Naive thymus-derived CD4-positive, alpha-beta T cell (primary cell): ENCODE measurements at regions of chr1 and their contacts with region 1.

Region 1: GRCh38 chr1:205061665-205062069 is 18.7 kb downstream of the CNTN2 start:
- DNase-seq: peak; percentile 58 to 79 (median 72)
- ATAC-seq: peak; percentile 83
- H3K4me3 ChIP-seq: no peak overlapping the region
- H3K4me3 Mint-ChIP-seq: no peak overlapping the region
- H3K27ac ChIP-seq: no peak overlapping the region
- H3K27ac Mint-ChIP-seq: no peak overlapping the region
- H3K4me1 ChIP-seq: no peaks in the 10 kb centered on the region
- H3K4me1 Mint-ChIP-seq: peaks cover 0 to 4% (median 0%) of the 10 kb centered on the region in 7 donors
- H3K27me3 ChIP-seq: no peaks in the 10 kb centered on the region
- H3K27me3 Mint-ChIP-seq: no peaks in the 10 kb centered on the region

Region 2: GRCh38 chr1:204975570-204976235 is 86.0 kb before region 1 on chr1:
- CTCF ChIA-PET with region 1: interaction called, 18 read pairs
- POLR2A ChIA-PET with region 1: no interaction called
- intact Hi-C with region 1: loop called (anchors 1 kb)
- DNase-seq: peak; percentile 14 to 60 (median 40)
- ATAC-seq: peak; percentile 71
- H3K4me3 ChIP-seq: no peak overlapping the region
- H3K4me3 Mint-ChIP-seq: no peak overlapping the region
- H3K27ac ChIP-seq: no peak overlapping the region
- H3K27ac Mint-ChIP-seq: no peak overlapping the region
- H3K4me1 ChIP-seq: no peaks in the 10 kb centered on the region
- H3K4me1 Mint-ChIP-seq: peaks cover 0 to 2% (median 0%) of the 10 kb centered on the region in 7 donors
- H3K27me3 ChIP-seq: no peaks in the 10 kb centered on the region
- H3K27me3 Mint-ChIP-seq: peaks cover 0 to 32% (median 20%) of the 10 kb centered on the region in 5 donors

Region 3: GRCh38 chr1:204989266-204990058 is 72.2 kb before region 1 on chr1:
- CTCF ChIA-PET with region 1: interaction called, 10 read pairs
- POLR2A ChIA-PET with region 1: no interaction called
- intact Hi-C with region 1: loop called in 1 of 2 experiments (anchors 1 kb)
- DNase-seq: peak; percentile 25 to 57 (median 44)
- ATAC-seq: peak; percentile 83
- H3K4me3 ChIP-seq: no peak overlapping the region
- H3K4me3 Mint-ChIP-seq: no peak overlapping the region
- H3K27ac ChIP-seq: no peak overlapping the region
- H3K27ac Mint-ChIP-seq: peak overlapping the region in 1 of 9 donors; percentile 24
- H3K4me1 ChIP-seq: no peaks in the 10 kb centered on the region
- H3K4me1 Mint-ChIP-seq: peaks cover 10 to 22% (median 16%) of the 10 kb centered on the region in 7 donors
- H3K27me3 ChIP-seq: no peaks in the 10 kb centered on the region
- H3K27me3 Mint-ChIP-seq: peaks cover 0 to 8% (median 4%) of the 10 kb centered on the region in 5 donors